Left lung (tissue), 14 donors: ENCODE measurements at regions of chr4 and their contacts with region 1.

Region 1: DNA sequence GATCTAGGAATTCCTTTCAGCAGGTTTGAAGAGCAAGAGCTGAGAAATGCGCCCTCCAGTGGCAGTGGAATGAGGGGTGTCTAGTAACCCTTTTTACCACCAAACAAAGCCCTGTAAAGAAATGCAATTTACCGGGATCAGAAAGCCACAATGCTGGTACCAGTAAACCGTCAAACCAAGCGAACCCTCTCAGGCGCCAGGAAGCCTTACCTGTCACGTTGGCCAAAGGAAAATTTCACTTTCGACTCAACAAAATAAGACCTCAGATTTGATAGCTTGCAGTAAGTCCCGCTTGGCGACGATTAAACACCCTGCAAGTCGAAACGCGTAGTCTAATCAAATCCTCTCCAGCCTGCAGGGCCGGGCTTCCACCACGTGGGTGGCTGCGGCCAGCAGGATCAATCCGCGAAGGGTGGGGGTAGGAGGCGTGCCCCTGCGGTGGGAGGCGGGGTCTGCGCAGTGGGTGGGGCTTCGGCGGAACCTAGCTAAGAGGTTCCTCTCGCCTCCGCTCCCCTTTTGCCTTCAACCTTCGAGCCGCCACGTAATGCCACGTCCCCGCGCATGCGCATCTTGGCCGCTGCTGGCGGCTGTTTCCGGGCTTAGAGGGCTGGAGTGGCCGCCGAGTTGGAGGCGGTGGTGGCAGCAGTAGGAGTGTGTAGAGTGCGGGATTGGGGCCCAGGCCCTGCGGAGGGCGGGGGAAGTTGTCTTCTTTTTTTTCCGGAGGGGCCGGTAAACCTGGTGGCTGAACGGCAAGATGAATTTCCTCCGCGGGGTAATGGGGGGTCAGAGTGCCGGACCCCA is at the start of gene USO1:
- DNase-seq: peak; percentile 99 to 100 (median 100)
- ATAC-seq: peak; percentile 97
- H3K4me3 ChIP-seq: peak within 1 kb of the TSS; percentile 84 to 93
- H3K27ac ChIP-seq: peak within 1 kb of the TSS; percentile 92 to 95
- H3K4me1 ChIP-seq: peaks cover 26 to 55% of the 10 kb centered on the region in 2 donors
- H3K27me3 ChIP-seq: no peaks in the 10 kb centered on the region
- CTCF ChIP-seq: peak; percentile 41 to 59
- polyA plus RNA-seq, gene USO1: 67.9 to 86.1 (median 78.3) TPM

Region 2: GRCh38 chr4:75048208-75048879 is 675.9 kb before region 1 on chr4:
- intact Hi-C with region 1: no loop called
- DNase-seq: no peak
- ATAC-seq: no peak
- H3K4me3 ChIP-seq: no peak overlapping the region
- H3K27ac ChIP-seq: no peak overlapping the region
- H3K4me1 ChIP-seq: no peaks in the 10 kb centered on the region
- H3K27me3 ChIP-seq: no peaks in the 10 kb centered on the region
- CTCF ChIP-seq: no peak

Region 3: GRCh38 chr4:75673027-75673958 is 51.0 kb before region 1 on chr4 and contains the start of gene G3BP2:
- intact Hi-C with region 1: loop called in 1 of 2 experiments (anchors 10 kb)
- DNase-seq: peak; percentile 97 to 99 (median 99)
- ATAC-seq: peak; percentile 98
- H3K4me3 ChIP-seq: peak within 1 kb of the TSS; percentile 92 to 99
- H3K27ac ChIP-seq: peak within 1 kb of the TSS; percentile 97 to 98
- H3K4me1 ChIP-seq: peaks cover 11 to 42% of the 10 kb centered on the region in 2 donors
- H3K27me3 ChIP-seq: no peaks in the 10 kb centered on the region
- CTCF ChIP-seq: no peak
- polyA plus RNA-seq, gene G3BP2: 119 to 136 (median 127) TPM

Region 4: DNA sequence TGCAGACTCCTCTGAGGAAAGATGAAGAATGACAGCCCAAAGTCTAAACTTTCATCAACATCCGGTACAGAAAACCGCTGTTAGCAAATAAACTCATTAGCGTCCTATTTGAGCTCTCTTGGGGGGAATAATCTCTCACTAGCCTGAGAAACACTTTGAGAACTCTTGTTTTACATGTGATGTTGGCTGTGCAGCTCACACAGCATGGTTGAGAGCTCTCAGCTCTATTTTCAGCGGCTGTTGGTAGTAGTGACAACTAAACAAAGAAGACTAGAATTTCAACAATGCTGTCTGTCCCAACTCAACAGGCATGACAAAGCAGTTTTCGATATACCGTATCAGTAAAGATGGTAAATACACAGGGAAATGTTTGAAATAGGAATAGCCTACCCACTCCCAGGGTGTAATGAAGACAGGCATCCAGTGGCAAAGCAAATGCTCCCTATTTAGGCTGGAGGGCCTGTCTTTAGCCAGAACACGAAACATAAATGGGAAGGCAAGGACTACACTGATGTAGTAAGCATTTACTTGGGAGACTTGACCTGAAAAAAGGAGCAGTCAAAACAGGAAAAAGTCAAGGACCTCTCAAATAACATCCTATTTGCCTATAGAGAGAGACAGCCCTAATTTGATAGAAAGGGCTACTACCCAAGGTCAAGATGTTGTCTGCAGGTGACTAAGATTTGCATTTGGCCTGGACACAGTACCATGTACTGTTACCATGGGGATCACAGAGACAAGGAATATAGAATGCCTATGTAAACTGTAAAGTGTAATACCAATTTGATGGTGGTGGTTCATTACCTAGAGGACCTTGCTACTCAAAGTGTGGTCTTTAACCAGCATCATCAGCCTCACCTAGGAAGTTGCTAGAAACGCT is 117.6 kb after region 1 on chr4:
- intact Hi-C with region 1: no loop called
- DNase-seq: peak in 1 of 4 donors; percentile 9
- ATAC-seq: peak; percentile 80
- H3K4me3 ChIP-seq: no peak overlapping the region
- H3K27ac ChIP-seq: peak overlapping the region in 1 of 2 donors; percentile 13
- H3K4me1 ChIP-seq: peaks cover 0 to 8% of the 10 kb centered on the region in 2 donors
- H3K27me3 ChIP-seq: no peaks in the 10 kb centered on the region
- CTCF ChIP-seq: no peak